ENCODE measurements at regions of chr16 and their contacts with region 1.

Region 1: GRCh38 chr16:30370444-30371247 is at the start of gene TBC1D10B:
- DNase-seq: peak; percentile 99
- ATAC-seq: peak; percentile 88
- H3K4me3 Mint-ChIP-seq: peak within 1 kb of the TSS; percentile 89
- H3K27ac Mint-ChIP-seq: peak within 1 kb of the TSS; percentile 97
- H3K4me1 Mint-ChIP-seq: peaks cover 40% of the 10 kb centered on the region
- H3K27me3 Mint-ChIP-seq: no peaks in the 10 kb centered on the region
- total RNA-seq, gene TBC1D10B: 38.1 to 43.4 TPM

Region 2: GRCh38 chr16:30335598-30336474 is 34.8 kb before region 1 on chr16:
- CTCF ChIA-PET with region 1: no interaction called
- POLR2A ChIA-PET with region 1: interaction called, 7 read pairs
- intact Hi-C with region 1: loop called in 1 of 2 experiments (anchors 1 kb)
- DNase-seq: peak; percentile 55
- ATAC-seq: peak; percentile 13
- H3K4me3 Mint-ChIP-seq: peak overlapping the region; percentile 87
- H3K27ac Mint-ChIP-seq: peak overlapping the region; percentile 73
- H3K4me1 Mint-ChIP-seq: peaks cover 22% of the 10 kb centered on the region
- H3K27me3 Mint-ChIP-seq: no peaks in the 10 kb centered on the region

Region 3: GRCh38 chr16:30395155-30395991 is 24.7 kb after region 1 on chr16 and contains the start of gene ZNF48:
- CTCF ChIA-PET with region 1: interaction called, 5 read pairs
- POLR2A ChIA-PET with region 1: interaction called, 4 read pairs
- intact Hi-C with region 1: loop called in 1 of 2 experiments (anchors 1 kb)
- DNase-seq: peak; percentile 67
- ATAC-seq: peak; percentile 61
- H3K4me3 Mint-ChIP-seq: peak within 1 kb of the TSS; percentile 81
- H3K27ac Mint-ChIP-seq: peak within 1 kb of the TSS; percentile 48
- H3K4me1 Mint-ChIP-seq: peaks cover 28% of the 10 kb centered on the region
- H3K27me3 Mint-ChIP-seq: no peaks in the 10 kb centered on the region
- total RNA-seq, gene ZNF48: 10.6 to 11.0 TPM

Region 4: GRCh38 chr16:30628627-30629540 is 258.2 kb after region 1 on chr16:
- CTCF ChIA-PET with region 1: interaction called, 3 read pairs
- POLR2A ChIA-PET with region 1: interaction called, 3 read pairs
- intact Hi-C with region 1: loop called in 1 of 2 experiments (anchors 1 kb)
- DNase-seq: peak; percentile 95
- ATAC-seq: peak; percentile 93
- H3K4me3 Mint-ChIP-seq: peak overlapping the region; percentile 58
- H3K27ac Mint-ChIP-seq: peak overlapping the region; percentile 82
- H3K4me1 Mint-ChIP-seq: peaks cover 14% of the 10 kb centered on the region
- H3K27me3 Mint-ChIP-seq: no peaks in the 10 kb centered on the region

Region 5: DNA sequence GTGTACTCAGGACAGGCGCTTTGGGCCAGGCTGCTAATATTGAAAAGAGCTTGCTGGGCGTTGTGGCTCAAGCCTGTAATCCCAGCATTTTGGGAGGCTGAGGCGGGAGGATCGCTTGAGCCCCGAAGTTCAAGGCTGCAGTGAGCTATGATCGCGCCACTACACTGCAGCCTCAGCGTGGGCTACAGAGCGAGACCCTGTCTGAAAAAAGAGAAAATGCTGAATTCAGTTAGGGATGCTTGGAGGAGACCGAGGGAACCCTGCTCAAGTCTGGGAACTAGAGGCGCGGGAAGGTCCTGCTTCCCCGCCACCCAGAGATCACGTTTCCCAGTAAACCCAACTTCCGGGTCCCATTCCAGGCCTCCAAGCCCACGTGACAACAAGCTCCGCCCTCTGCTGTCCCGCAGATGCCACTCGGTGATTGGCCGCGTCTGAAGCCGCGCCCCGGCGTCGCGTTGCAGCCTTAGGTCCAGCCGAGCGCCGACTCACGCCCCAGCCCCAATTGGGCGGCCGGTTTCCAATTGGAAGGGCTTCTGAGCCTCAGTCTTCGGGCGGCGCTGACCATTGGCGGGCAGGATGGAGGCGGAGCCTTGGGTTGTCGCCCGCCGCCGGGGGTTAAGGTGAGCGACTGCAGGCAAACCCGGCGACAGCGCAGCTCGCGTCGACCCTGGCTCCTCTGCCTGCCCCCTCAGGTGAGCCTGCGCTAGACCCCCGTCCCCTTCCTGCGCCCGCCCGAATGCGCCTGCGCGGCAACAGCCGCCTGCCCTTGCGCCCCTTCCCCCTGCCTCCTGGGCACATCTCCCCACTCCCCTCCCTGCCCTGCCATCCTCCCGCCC is 377.4 kb after region 1 on chr16 and contains the start of gene PHKG2:
- CTCF ChIA-PET with region 1: no interaction called
- POLR2A ChIA-PET with region 1: no interaction called
- intact Hi-C with region 1: loop called in 1 of 2 experiments (anchors 2 kb)
- DNase-seq: peak; percentile 99
- ATAC-seq: peak; percentile 99
- H3K4me3 Mint-ChIP-seq: peak within 1 kb of the TSS; percentile 88
- H3K27ac Mint-ChIP-seq: peak within 1 kb of the TSS; percentile 88
- H3K4me1 Mint-ChIP-seq: peaks cover 21% of the 10 kb centered on the region
- H3K27me3 Mint-ChIP-seq: no peaks in the 10 kb centered on the region
- total RNA-seq, gene PHKG2: 21.8 to 26.0 TPM

Measured in activated CD4-positive, alpha-beta T cell treated with anti-CD3 and anti-CD28 coated beads for 36 hours (primary cell).